GM12878 (cell line): ENCODE measurements at regions of chr1 and their contacts with region 1.

Region 1: GRCh38 chr1:153510984-153511410 is 24.8 kb downstream of the S100A6 start:
- DNase-seq: no peak
- ATAC-seq: peak; percentile 97
- H3K4me3 ChIP-seq: no peak overlapping the region
- H3K27ac ChIP-seq: no peak overlapping the region
- H3K4me1 ChIP-seq: no peaks in the 10 kb centered on the region
- H3K27me3 ChIP-seq: no peaks in the 10 kb centered on the region
- CTCF ChIP-seq: peak; percentile 85 to 97 (median 91)
- EP300 ChIP-seq: no peak
- POLR2A ChIP-seq: no peak
- RAD21 ChIP-seq: peak; percentile 92

Region 2: DNA sequence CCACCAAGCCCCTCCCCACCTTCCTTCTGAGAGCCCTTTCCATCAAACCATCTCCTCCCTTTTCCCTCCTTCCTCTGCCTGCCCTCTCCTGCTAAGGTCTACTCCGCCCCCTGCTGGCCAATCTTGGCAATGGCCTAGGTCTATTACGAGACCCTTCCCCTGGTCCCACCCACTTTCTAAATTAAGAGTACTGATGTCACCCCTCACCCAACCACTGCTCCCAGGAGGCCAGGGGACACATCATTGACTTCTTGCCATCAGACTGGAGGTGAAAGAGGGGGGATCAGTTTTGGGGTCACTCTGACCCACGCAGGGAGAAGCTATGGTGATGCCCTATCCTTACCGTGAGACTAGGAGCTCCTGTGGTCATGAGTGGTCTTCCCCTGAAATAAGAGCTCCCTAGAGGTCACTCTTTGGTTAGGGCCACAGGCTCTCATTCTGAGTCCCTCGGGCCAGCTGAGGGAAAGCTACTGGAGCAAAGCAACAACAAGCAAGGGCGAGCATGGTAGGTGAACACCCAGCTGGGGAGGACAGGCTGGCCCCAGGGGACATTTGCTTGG is 15.9 kb before region 1 on chr1:
- CTCF ChIA-PET with region 1: interaction called, 16 read pairs
- POLR2A ChIA-PET with region 1: no interaction called
- RAD21 ChIA-PET with region 1: no interaction called
- SMC1A ChIA-PET with region 1: no interaction called
- in situ Hi-C with region 1: no loop called
- intact Hi-C with region 1: no loop called
- DNase-seq: no peak
- ATAC-seq: peak; percentile 89
- H3K4me3 ChIP-seq: no peak overlapping the region
- H3K27ac ChIP-seq: no peak overlapping the region
- H3K4me1 ChIP-seq: peaks cover 3% of the 10 kb centered on the region; the same call in 1 of the 2 replicates
- H3K27me3 ChIP-seq: no peaks in the 10 kb centered on the region; a peak in 2 of 4 replicates
- CTCF ChIP-seq: peak; percentile 79 to 91 (median 89)
- EP300 ChIP-seq: no peak
- POLR2A ChIP-seq: no peak
- RAD21 ChIP-seq: peak; percentile 87

Region 3: DNA sequence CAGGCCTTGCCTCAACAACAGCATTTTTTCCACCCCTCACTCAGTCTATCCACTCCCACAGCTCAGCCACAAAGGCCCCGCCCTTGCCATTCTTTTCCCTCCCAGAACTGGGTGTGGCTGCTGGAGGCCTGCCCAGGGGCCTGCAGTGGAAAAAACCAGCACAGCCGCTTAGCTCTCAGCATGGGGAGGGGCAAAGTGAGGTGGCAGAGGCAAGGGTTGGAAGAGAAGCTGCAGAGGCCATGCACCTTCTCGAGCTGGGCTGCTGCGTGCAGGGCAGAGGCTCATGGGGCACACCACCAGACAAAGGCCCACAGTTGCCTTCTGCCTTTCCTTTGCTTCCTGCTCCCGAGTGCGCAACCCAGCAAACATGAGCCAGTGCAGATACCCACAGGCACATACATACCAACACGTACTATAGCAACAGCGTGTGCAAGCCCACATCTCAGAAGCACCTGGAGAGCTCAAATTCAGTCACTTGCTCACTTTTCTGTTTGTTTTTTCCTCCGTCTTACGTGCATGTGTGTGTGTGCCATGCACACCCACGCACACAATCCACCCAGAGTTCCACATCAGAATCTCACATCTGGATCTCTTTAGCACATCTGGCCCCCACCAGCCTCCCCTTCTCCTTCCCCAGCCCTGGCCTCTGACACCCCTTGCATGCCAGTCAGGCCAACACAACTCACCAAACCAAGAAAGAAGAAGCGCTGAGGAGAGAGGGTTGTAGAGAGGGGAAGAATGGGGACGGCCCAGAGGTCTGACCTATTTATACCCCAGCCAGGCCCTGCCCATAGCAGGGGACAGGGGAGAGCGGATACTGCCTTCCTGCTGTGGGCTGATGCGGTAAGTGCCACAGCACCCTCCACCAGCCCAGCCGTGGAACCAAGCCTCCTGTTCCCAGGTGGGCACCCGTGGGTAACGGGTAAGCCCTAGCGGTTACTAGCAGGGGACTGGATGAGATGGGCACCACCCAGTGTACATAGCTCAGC is 34.4 kb after region 1 on chr1 and contains the start of gene S100A4:
- CTCF ChIA-PET with region 1: interaction called, 15 read pairs
- POLR2A ChIA-PET with region 1: interaction called, 3 read pairs
- RAD21 ChIA-PET with region 1: no interaction called
- SMC1A ChIA-PET with region 1: interaction called, 3 read pairs
- in situ Hi-C with region 1: no loop called
- intact Hi-C with region 1: no loop called
- DNase-seq: peak; percentile 46
- ATAC-seq: peak; percentile 85
- H3K4me3 ChIP-seq: no peak within 1 kb of the TSS
- H3K27ac ChIP-seq: no peak within 1 kb of the TSS
- H3K4me1 ChIP-seq: peaks cover 25% of the 10 kb centered on the region
- H3K27me3 ChIP-seq: no peaks in the 10 kb centered on the region
- CTCF ChIP-seq: no peak
- EP300 ChIP-seq: no peak
- POLR2A ChIP-seq: peak; percentile 58; the same call in 1 of the 2 replicates
- RAD21 ChIP-seq: no peak
- polyA plus RNA-seq, gene S100A4: 73.9 to 104 TPM

Region 4: DNA sequence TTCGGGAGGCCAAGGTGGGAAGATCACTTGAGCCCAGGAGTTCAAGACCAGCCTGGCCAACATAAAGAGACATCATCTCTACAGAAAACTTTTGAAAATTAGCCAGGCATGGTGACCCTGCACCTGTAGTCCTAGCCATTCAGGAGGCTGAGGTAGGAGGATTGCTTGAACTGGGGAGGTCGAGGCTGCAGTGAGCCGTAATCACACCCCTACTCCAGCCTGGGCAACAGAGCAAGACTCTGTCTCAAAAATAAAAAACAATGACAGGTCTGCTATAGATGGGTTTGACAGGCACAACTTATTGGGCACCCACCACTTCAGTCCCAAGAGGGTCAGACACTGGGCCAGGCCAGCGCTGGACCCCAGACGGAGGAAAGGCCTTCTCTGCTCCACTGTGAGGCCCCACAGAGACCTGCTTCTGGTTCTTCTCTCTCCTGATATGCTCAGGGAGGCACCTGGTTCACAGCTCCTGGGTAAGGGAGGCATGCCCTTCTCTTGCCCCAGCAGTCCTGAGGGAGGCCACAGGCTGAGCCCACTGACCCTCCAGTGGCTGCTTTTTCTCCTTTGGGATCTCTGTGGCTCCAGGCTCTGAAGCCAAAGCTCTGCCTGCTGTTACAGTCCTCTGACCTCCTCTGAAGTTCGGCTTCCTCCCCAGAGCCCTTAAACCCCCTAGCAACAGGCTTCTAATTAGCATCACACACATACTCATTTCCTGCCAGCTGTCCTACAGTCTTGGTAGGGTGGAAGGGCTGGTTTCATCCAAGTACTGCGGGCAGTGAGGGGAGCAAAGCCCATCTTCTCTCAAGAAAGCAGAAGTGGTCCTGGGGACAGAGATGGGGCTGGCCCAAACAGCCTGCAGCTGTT is 87.5 kb after region 1 on chr1:
- CTCF ChIA-PET with region 1: interaction called, 12 read pairs
- POLR2A ChIA-PET with region 1: no interaction called
- RAD21 ChIA-PET with region 1: no interaction called
- SMC1A ChIA-PET with region 1: no interaction called
- in situ Hi-C with region 1: no loop called
- intact Hi-C with region 1: no loop called
- DNase-seq: peak; percentile 88
- ATAC-seq: peak; percentile 99
- H3K4me3 ChIP-seq: no peak overlapping the region
- H3K27ac ChIP-seq: peak overlapping the region; percentile 97
- H3K4me1 ChIP-seq: peaks cover 22% of the 10 kb centered on the region
- H3K27me3 ChIP-seq: no peaks in the 10 kb centered on the region
- CTCF ChIP-seq: no peak
- EP300 ChIP-seq: peak; percentile 56 to 64; a peak in 3 of 4 replicates
- POLR2A ChIP-seq: peak; percentile 76
- RAD21 ChIP-seq: 0 out of 2 replicates have a peak, but pooled peaks have one; percentile 13

Region 5: DNA sequence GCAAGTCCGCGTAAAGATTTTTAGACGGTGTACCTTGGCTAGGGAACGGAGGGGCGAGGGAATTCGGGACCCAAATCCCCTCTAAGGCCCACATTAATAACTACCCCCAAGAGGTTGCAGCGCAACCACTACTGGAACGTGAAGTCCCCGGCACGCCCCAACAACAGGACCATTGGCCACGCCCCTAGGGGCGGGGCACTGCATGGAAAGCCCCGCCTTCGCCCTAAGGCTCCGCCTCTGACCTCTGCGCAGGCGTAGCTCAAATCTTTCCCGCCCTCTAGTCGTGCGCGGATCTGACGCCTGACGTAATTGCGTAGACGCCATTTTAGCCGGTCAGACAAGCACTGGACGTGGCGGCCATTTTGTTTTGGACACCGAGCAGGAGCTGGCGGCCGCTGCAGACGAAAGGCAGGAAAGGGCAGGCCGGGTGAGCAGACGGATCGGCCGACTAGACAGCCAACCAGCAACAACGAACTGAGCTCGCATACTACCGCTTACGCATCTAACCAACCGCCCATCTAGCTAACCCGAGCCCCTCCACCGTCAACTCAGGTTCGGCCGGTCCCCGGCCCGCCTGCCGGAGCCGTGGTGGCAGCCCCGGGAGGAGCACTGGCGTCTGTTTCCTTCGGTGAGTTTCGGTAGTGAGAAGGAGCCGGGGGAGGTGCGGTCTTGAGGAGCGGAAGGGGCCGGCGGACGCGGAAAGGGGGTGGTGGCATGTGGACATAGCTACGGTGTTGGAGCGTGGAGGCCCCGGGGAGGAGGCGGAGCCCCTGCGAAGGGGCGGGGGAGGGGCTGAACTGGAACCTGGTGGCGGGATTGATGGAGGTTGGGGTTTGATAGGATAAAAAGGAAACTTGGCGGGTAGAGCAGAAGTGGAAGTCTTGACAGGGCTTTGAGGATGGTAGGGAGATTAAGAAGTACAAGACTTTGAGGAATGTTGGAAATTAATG is 123.0 kb after region 1 on chr1 and contains the start of gene CHTOP:
- CTCF ChIA-PET with region 1: interaction called, 17 read pairs
- POLR2A ChIA-PET with region 1: interaction called, 5 read pairs
- RAD21 ChIA-PET with region 1: interaction called, 11 read pairs
- SMC1A ChIA-PET with region 1: interaction called, 4 read pairs
- in situ Hi-C with region 1: no loop called
- intact Hi-C with region 1: no loop called
- DNase-seq: peak; percentile 95
- ATAC-seq: peak; percentile 96
- H3K4me3 ChIP-seq: peak within 1 kb of the TSS; percentile 89
- H3K27ac ChIP-seq: peak within 1 kb of the TSS; percentile 98
- H3K4me1 ChIP-seq: peaks cover 6% of the 10 kb centered on the region
- H3K27me3 ChIP-seq: no peaks in the 10 kb centered on the region
- CTCF ChIP-seq: no peak
- EP300 ChIP-seq: no peak
- POLR2A ChIP-seq: peak; percentile 98
- RAD21 ChIP-seq: no peak
- polyA plus RNA-seq, gene CHTOP: 8.4 to 15.9 TPM